ENCODE measurements at regions of chr6 and their contacts with region 1.

Region 1: GRCh38 chr6:130293800-130294199 is 71.0 kb upstream of the SAMD3 start:
- DNase-seq: peak; percentile 19
- H3K4me3 ChIP-seq: no peak overlapping the region
- CTCF ChIP-seq: peak; percentile 73

Region 2: DNA sequence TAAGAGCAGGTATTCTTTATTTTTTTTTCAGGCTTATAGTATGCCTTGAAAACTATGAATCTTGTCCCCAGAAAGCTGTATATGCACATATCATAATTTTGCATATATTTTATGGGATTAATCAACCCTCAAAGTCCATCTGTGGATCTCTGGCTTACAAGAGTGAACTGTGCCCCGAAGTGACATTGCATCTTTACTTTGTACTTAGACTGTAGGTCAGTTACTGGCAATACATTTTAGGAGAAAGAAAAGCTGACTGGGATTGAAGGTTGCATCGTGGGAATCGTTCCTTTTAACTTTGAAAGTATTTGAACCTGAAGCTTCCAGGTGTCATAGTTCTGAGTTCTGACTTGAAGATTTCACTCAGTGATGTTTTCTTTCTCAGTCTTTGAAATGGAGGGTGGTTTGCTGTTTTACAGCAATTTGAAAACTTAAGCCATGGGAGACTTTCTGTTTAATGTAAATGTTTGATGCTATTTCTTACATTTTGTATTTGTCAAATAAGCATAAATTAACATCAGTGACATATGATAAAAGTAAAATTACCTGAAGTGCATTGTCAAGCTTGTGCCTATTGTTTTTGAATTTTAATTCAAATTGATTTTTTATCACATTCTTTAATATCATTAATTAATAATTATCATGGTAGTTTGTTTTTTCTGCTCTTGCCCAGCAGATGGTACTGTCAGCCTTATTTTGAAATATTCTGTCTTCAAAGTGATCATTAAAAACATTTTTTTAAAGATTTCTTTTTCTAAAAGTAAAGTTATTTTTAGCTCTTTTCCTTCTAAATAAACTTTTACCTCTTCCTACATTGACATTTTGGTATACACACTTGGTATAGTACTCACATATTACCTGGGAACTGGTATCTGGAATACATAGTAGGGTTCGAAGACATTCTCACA is 246.5 kb before region 1 on chr6:
- CTCF ChIA-PET with region 1: interaction called, 10 read pairs
- POLR2A ChIA-PET with region 1: no interaction called
- DNase-seq: no peak
- H3K4me3 ChIP-seq: no peak overlapping the region
- CTCF ChIP-seq: no peak

Region 3: GRCh38 chr6:130307752-130308361 is 14.1 kb after region 1 on chr6:
- CTCF ChIA-PET with region 1: interaction called, 48 read pairs
- POLR2A ChIA-PET with region 1: no interaction called
- DNase-seq: peak; percentile 34
- H3K4me3 ChIP-seq: no peak overlapping the region
- CTCF ChIP-seq: no peak

Region 4: GRCh38 chr6:130681028-130681427 is 387.2 kb after region 1 on chr6:
- CTCF ChIA-PET with region 1: no interaction called
- POLR2A ChIA-PET with region 1: no interaction called
- DNase-seq: peak; percentile 42
- H3K4me3 ChIP-seq: no peak overlapping the region
- CTCF ChIP-seq: no peak

Region 5: GRCh38 chr6:130760006-130760405 is 466.2 kb after region 1 on chr6:
- CTCF ChIA-PET with region 1: interaction called, 28 read pairs
- POLR2A ChIA-PET with region 1: no interaction called
- DNase-seq: no peak
- H3K4me3 ChIP-seq: no peak overlapping the region
- CTCF ChIP-seq: peak; percentile 69

Region 6: DNA sequence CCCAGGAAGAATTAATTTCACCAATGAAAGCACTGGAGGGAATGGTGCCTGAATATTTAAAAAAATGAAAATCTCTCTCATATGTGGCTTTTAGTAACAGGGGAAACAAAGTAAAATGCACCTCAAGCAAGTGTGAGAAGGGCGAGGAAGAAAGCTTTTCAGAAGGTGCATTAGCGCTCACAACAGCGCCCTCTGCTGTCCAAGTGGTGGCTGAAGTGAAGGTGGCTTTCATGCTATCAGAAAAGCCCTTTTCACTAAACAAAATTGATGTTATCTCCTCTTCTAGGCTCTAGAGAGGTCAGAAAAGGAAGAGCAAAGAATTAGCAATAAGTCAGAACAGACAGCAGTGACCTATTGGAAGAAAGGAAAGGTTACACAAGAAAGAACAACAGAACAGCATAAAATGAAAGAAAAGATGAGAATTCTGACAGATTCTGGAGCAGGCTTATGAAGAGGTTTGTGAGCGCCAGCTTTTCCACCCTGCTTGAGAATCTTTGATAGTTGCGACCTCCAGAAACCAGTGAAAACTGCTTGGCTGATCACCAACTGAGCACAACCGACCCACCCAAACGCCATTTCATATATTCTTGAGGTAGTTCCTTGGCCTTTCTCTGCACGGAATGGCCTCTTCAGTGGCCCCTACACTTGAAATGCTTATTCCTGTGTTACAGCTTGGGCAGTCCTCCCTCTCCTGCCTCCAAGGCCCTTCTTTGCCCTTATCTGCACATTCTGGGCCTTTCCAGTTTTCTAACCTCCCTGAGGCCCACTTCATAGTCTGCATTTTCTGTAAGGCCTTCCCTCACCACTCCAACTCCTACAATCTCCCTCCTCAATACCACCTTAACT is 578.7 kb after region 1 on chr6:
- CTCF ChIA-PET with region 1: interaction called, 21 read pairs
- POLR2A ChIA-PET with region 1: no interaction called
- DNase-seq: no peak
- H3K4me3 ChIP-seq: no peak overlapping the region
- CTCF ChIP-seq: peak; percentile 84